ENCODE measurements at regions of chr5 and their contacts with region 1.

Region 1: GRCh38 chr5:137743031-137743640 is 7.2 kb upstream of the KLHL3 start:
- DNase-seq: peak in 1 of 2 donors; percentile 43
- H3K4me3 ChIP-seq: no peak overlapping the region
- CTCF ChIP-seq: no peak
- POLR2A ChIP-seq: no peak

Region 2: DNA sequence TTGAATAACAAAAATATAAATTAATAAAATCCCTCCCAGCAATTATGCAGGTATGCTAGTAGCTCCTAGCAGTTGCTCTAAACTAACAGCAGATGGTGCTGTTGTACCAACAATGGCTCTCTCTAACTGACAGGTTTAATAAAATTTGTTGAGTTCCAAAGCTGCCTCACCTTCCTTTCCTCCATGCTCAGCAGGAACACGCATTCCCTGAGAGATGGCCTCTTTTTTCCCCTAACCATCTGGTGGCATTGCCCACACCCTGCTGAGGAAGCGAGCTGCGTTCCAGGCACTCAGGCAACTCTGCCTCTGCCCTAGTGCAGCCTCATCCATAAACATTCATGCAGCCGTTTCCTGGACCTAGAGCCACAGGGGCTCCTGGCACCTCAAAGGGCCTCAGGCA is 113.5 kb before region 1 on chr5:
- intact Hi-C with region 1: loop called (anchors 10 kb)
- DNase-seq: peak in 1 of 2 donors; percentile 68
- H3K4me3 ChIP-seq: no peak overlapping the region
- CTCF ChIP-seq: peak in 2 of 3 donors; percentile 84 to 94
- POLR2A ChIP-seq: no peak

Region 3: DNA sequence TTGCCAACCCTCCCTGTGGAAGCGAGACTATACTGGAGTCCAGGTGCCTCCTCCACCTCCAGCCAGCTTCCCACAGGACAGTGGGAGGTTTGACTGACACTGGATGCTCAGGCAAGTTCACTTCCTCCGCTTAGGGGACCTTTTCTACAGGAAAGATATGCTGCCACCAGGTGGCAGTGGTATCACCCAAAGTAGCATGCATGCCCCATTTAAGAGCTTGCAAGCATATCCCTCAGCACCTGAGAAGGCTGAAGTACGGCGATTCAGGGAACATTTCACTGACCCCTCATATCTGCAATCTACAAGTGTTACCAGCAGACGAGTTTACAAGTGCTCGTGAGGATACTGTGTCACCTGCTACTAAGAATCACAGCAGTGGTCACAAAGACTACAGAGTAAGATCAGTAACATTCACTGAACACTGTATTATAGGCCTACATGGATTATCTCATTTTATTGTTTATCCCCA is 82.8 kb before region 1 on chr5:
- intact Hi-C with region 1: loop called (anchors 2 kb)
- DNase-seq: peak; percentile 64 to 91
- H3K4me3 ChIP-seq: no peak overlapping the region
- CTCF ChIP-seq: no peak
- POLR2A ChIP-seq: no peak